ENCODE measurements at regions of chr1 and their contacts with region 1.

Region 1: DNA sequence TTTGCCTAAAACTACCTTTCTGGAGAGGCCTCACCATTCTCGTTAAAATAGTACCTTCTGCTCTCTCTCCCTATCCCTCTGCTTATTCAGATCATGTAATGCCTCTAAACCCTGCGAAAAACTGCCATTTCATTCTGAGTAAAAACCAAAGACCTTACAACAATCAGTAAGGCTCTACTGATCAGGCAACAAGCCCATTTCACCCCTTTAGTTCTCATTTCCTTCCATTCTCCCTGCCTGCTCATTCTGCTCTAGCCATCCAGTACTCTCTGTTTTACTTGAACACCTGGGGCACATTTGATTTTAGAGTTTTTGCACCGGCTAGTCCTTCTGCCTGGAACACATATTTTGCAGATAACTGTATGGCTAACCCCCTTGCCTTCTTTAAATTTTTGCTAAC is 187.8 kb downstream of the COQ8A start:
- DNase-seq: no peak
- ATAC-seq: no peak
- H3K4me3 ChIP-seq: no peak overlapping the region
- H3K4me3 Mint-ChIP-seq: no peak overlapping the region
- H3K27ac ChIP-seq: no peak overlapping the region
- H3K27ac Mint-ChIP-seq: no peak overlapping the region
- H3K4me1 ChIP-seq: no peaks in the 10 kb centered on the region
- H3K4me1 Mint-ChIP-seq: no peaks in the 10 kb centered on the region
- H3K27me3 ChIP-seq: no peaks in the 10 kb centered on the region
- H3K27me3 Mint-ChIP-seq: no peaks in the 10 kb centered on the region
- CTCF ChIP-seq: no peak

Region 2: DNA sequence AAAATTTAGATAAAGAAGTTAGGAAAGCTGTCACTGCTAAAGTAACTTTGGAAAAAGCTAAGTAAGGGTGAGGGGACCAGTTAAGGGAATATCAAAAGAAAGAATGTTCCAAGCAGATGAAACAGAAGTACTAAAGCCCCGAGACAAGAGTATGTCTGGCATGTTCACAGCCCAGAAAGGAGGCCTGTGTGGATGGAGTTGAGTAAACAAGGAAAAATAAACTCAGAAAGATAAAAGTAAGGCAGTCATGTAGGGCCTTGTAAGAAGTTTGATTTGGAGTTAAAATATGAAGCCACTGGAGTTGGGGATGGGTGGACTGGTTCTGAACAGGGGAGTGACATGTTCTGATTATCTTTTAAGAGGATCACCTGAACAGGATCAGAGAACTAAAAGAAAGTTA is 12.5 kb after region 1 on chr1:
- CTCF ChIA-PET with region 1: no interaction called
- POLR2A ChIA-PET with region 1: no interaction called
- intact Hi-C with region 1: no loop called
- DNase-seq: no peak
- ATAC-seq: no peak
- H3K4me3 ChIP-seq: no peak overlapping the region
- H3K4me3 Mint-ChIP-seq: no peak overlapping the region
- H3K27ac ChIP-seq: no peak overlapping the region
- H3K27ac Mint-ChIP-seq: no peak overlapping the region
- H3K4me1 ChIP-seq: no peaks in the 10 kb centered on the region
- H3K4me1 Mint-ChIP-seq: no peaks in the 10 kb centered on the region
- H3K27me3 ChIP-seq: peaks cover 0 to 4% of the 10 kb centered on the region in 2 experiments
- H3K27me3 Mint-ChIP-seq: no peaks in the 10 kb centered on the region
- CTCF ChIP-seq: no peak

Region 3: GRCh38 chr1:227156520-227156919 is 28.6 kb after region 1 on chr1:
- CTCF ChIA-PET with region 1: no interaction called
- POLR2A ChIA-PET with region 1: no interaction called
- intact Hi-C with region 1: no loop called
- DNase-seq: no peak
- ATAC-seq: no peak
- H3K4me3 ChIP-seq: no peak overlapping the region
- H3K4me3 Mint-ChIP-seq: no peak overlapping the region
- H3K27ac ChIP-seq: no peak overlapping the region
- H3K27ac Mint-ChIP-seq: no peak overlapping the region
- H3K4me1 ChIP-seq: no peaks in the 10 kb centered on the region
- H3K4me1 Mint-ChIP-seq: no peaks in the 10 kb centered on the region
- H3K27me3 ChIP-seq: no peaks in the 10 kb centered on the region
- H3K27me3 Mint-ChIP-seq: no peaks in the 10 kb centered on the region
- CTCF ChIP-seq: no peak

Region 4: GRCh38 chr1:227166559-227166958 is 38.7 kb after region 1 on chr1:
- CTCF ChIA-PET with region 1: no interaction called
- POLR2A ChIA-PET with region 1: no interaction called
- intact Hi-C with region 1: no loop called
- DNase-seq: no peak
- ATAC-seq: no peak
- H3K4me3 ChIP-seq: no peak overlapping the region
- H3K4me3 Mint-ChIP-seq: no peak overlapping the region
- H3K27ac ChIP-seq: no peak overlapping the region
- H3K27ac Mint-ChIP-seq: no peak overlapping the region
- H3K4me1 ChIP-seq: no peaks in the 10 kb centered on the region
- H3K4me1 Mint-ChIP-seq: no peaks in the 10 kb centered on the region
- H3K27me3 ChIP-seq: peaks cover 5 to 6% of the 10 kb centered on the region in 2 experiments
- H3K27me3 Mint-ChIP-seq: peaks cover 14% of the 10 kb centered on the region
- CTCF ChIP-seq: no peak

Region 5: DNA sequence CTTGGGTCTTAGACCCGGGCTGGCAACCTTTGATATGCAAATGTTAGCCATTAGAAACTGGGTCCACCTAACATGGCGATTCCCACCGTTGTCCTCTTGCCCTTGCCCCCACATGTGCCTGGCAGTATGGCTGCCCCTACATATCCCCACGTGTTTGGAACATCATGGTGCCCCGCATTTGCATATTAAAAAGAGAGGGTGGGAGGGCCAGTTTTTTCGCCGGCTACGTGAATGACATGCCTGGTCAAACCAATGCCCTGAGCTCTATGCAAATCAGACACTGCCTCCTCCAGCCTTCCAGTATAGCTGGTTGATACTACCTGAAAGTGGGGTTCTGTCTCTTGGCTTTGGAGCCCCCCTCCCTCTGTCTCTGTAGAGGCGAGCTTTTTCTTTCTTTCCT is 57.4 kb after region 1 on chr1:
- CTCF ChIA-PET with region 1: no interaction called
- POLR2A ChIA-PET with region 1: no interaction called
- intact Hi-C with region 1: loop called in 1 of 2 experiments (anchors 10 kb)
- DNase-seq: no peak
- ATAC-seq: no peak
- H3K4me3 ChIP-seq: no peak overlapping the region
- H3K4me3 Mint-ChIP-seq: no peak overlapping the region
- H3K27ac ChIP-seq: no peak overlapping the region
- H3K27ac Mint-ChIP-seq: no peak overlapping the region
- H3K4me1 ChIP-seq: no peaks in the 10 kb centered on the region
- H3K4me1 Mint-ChIP-seq: no peaks in the 10 kb centered on the region
- H3K27me3 ChIP-seq: peaks cover 3 to 15% of the 10 kb centered on the region in 2 experiments
- H3K27me3 Mint-ChIP-seq: peaks cover 11% of the 10 kb centered on the region
- CTCF ChIP-seq: no peak